Activated naive CD8-positive, alpha-beta T cell treated with anti-CD3 and anti-CD28 coated beads, Interleukin-2, amount 10 ng/mL, durations not matched to agents 7 days and 5 days (primary cell): ENCODE measurements at regions of chr17 and their contacts with region 1.

Region 1: GRCh38 chr17:74759243-74759801 is 10.9 kb downstream of the NHERF1 start:
- DNase-seq: peak; percentile 73
- ATAC-seq: peak; percentile 89
- H3K4me3 Mint-ChIP-seq: peak overlapping the region; percentile 64
- H3K27ac Mint-ChIP-seq: peak overlapping the region; percentile 84
- H3K4me1 Mint-ChIP-seq: peaks cover 44% of the 10 kb centered on the region
- H3K27me3 Mint-ChIP-seq: no peaks in the 10 kb centered on the region

Region 2: DNA sequence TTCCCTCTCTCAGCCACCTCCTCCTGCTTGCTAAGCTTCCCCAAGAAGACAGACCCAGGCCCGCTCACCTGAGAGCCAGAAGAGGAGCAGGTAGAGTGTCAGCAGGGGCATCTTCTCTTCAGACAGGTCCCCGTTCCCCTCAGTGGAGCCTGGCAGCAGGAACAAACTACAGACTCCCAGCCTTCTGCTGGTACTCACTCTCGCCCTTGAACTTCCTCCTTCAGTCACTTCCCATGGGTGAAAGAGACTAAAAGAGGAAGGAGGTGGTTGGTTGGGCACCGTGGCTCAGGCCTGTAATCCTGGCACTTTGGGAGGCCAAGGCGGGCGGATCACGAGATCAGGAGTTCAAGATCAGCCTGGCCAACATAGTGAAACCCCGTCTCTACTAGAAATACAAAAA is 46.6 kb before region 1 on chr17 and contains the start of gene CD300LF:
- POLR2A ChIA-PET with region 1: no interaction called
- DNase-seq: no peak
- ATAC-seq: no peak
- H3K4me3 Mint-ChIP-seq: no peak within 1 kb of the TSS
- H3K27ac Mint-ChIP-seq: no peak within 1 kb of the TSS
- H3K4me1 Mint-ChIP-seq: peaks cover 6% of the 10 kb centered on the region
- H3K27me3 Mint-ChIP-seq: peaks cover 56% of the 10 kb centered on the region
- total RNA-seq, gene CD300LF: 0.25 TPM in 1 of 2 experiments, not detected in the other

Region 3: DNA sequence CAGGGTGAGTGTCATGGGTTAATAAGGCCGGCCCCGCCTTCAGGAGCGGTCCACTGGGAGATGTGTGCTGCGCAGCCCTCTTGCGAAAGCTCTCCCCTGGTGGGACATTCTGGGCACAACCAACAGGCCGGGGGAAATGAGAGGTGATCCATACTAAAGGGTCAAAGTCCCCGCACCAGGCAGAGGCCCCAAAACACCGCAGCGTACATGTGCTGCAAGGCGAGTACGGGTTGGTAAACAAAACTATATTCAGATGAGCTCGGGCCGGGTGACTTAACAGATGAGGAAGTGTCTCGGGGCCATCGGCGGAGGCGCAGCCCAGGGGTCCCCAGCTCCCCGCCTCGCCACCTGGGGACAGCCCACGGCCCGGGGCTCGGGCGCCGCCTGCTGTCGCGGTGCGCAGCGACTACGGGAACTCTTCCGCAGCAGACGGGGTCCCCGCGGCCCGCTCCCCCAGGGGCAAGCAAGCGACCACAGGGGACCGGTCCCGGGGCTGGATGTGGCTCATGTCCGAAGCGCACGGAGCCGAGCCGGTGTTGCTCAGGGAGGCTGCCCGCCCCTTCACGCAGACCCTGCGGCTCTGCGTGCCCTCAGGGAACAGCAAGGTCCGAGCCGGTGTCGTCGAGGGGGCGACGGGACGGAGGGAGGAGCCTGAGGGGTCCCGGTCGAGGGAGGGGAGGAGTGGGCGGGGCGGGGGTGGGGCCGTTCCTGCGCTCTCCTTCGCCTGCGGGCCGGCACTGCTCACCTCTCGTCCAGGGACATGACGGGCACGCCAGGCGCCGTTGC is 22.6 kb before region 1 on chr17 and contains the start of gene RAB37:
- POLR2A ChIA-PET with region 1: interaction called, 13 read pairs
- DNase-seq: peak; percentile 78
- ATAC-seq: peak; percentile 16
- H3K4me3 Mint-ChIP-seq: peak within 1 kb of the TSS; percentile 87
- H3K27ac Mint-ChIP-seq: peak within 1 kb of the TSS; percentile 88
- H3K4me1 Mint-ChIP-seq: peaks cover 41% of the 10 kb centered on the region
- H3K27me3 Mint-ChIP-seq: peaks cover 18% of the 10 kb centered on the region
- total RNA-seq, gene RAB37: 24.7 to 27.5 TPM

Region 4: DNA sequence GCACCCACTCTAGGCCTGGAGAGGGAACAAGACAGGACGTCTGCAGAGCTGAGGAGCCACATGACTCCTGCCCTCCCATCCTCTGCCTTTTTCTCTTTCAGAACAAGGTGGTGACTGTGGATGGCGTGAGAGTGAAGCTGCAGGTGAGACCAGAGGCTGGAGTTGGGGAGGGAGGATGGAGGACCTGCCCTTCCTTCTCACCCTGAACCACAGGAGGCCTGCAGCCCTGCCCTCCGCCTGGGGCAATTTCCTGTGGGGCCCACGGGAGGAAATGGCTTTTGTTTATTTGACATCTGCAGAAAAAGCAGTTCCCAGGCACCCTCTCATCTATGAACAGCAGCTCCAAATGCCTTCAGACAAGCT is 17.2 kb before region 1 on chr17:
- POLR2A ChIA-PET with region 1: interaction called, 13 read pairs
- DNase-seq: peak; percentile 73
- ATAC-seq: peak; percentile 46
- H3K4me3 Mint-ChIP-seq: peak overlapping the region; percentile 77
- H3K27ac Mint-ChIP-seq: peak overlapping the region; percentile 94
- H3K4me1 Mint-ChIP-seq: peaks cover 70% of the 10 kb centered on the region
- H3K27me3 Mint-ChIP-seq: no peaks in the 10 kb centered on the region

Region 5: GRCh38 chr17:74748529-74749365 is 10.6 kb before region 1 on chr17 and contains the start of gene NHERF1:
- POLR2A ChIA-PET with region 1: interaction called, 70 read pairs
- DNase-seq: peak; percentile 99
- ATAC-seq: peak; percentile 85
- H3K4me3 Mint-ChIP-seq: peak within 1 kb of the TSS; percentile 93
- H3K27ac Mint-ChIP-seq: peak within 1 kb of the TSS; percentile 77
- H3K4me1 Mint-ChIP-seq: peaks cover 56% of the 10 kb centered on the region
- H3K27me3 Mint-ChIP-seq: no peaks in the 10 kb centered on the region
- total RNA-seq, gene NHERF1: 241 to 244 TPM

Region 6: DNA sequence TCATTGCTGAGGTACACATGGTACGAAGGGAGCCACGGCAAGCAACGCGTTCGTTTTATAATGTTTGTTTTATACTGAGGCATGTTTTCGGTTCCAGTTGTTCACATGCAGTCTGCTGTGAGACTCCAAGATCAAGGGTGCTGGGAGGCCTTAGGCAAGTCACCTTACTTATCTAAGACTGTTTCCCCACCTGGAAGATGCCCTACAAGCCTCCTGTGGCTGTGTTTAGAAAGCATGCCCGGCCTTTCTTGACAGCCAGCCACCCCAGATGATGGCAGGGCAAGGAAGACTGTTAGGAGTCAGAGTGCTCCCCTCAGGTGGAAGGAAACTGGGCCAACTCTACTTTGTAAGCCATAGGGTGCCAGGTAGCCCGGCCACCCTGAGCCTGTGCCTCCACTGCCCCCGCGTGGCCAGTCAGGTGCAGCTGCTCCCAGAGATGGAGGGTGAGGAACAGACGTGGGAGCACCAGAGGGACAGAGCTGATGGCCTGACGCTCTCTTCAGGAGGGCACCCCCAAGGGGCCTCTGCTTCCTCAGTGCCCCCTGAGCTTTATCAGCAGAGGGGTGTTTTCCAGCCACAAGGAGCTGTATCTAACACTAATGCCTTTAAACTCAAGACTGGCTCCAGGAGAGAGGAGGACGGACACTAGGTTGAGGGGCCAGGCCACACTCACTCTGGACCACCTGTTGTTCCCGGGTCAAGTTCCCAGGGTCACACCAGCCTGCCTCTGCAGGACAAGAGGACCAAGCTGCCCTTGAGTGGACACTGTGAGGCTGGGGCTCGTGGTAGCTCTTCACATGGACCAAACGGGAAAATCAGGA is 11.4 kb after region 1 on chr17:
- POLR2A ChIA-PET with region 1: interaction called, 17 read pairs
- DNase-seq: peak; percentile 81
- ATAC-seq: peak; percentile 86
- H3K4me3 Mint-ChIP-seq: no peak overlapping the region
- H3K27ac Mint-ChIP-seq: peak overlapping the region; percentile 42
- H3K4me1 Mint-ChIP-seq: peaks cover 24% of the 10 kb centered on the region
- H3K27me3 Mint-ChIP-seq: no peaks in the 10 kb centered on the region

Region 7: GRCh38 chr17:74776044-74776977 is 17.0 kb after region 1 on chr17 and contains the start of gene NAT9:
- POLR2A ChIA-PET with region 1: interaction called, 17 read pairs
- DNase-seq: peak; percentile 100
- ATAC-seq: peak; percentile 77
- H3K4me3 Mint-ChIP-seq: peak within 1 kb of the TSS; percentile 99
- H3K27ac Mint-ChIP-seq: peak within 1 kb of the TSS; percentile 94
- H3K4me1 Mint-ChIP-seq: peaks cover 53% of the 10 kb centered on the region
- H3K27me3 Mint-ChIP-seq: no peaks in the 10 kb centered on the region
- total RNA-seq, gene NAT9: 37.6 to 42.1 TPM